BJ (cell line): ENCODE measurements at regions of chr10 and their contacts with region 1.

Region 1: DNA sequence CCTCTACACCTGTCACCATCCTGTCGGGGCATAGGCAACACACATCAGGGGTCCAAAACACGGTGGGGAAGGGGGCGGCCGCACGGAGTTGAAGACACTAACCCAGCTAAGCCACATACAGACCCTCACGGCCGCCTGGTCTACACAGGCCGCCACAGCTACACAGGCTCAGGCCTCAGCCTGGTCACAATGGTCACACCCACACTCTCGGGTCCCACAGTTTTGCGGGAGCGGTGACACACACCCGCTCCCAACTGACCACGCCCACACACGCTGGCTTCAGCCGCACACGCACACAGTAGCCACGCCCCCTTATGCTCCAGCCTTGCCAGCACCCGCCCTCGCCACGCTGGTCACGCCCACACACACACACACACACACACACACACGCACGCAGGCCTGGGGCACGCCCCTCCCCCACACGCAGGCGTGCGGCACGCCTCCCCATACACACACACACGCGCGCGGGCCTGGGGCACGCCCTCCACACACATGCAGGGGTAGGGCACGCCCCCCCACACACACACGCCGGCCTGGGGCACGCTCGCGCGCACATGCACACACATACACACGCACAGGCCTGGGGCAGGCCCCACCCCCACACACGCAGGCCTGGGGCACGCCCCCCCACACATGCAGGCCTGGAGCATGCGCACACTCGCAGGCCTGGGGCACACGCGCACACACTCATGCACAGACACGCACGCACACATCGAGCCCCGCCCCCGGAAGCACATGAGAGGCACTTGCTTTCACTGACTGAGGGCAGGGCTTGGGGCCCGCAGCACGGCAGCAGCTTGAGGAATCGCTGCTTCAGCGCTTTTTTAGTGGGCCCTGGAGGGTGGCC is 12.3 kb upstream of the OGA start:
- DNase-seq: peak; percentile 37
- H3K4me3 ChIP-seq: peak overlapping the region; percentile 45
- H3K27me3 ChIP-seq: no peaks in the 10 kb centered on the region
- CTCF ChIP-seq: no peak

Region 2: GRCh38 chr10:101507828-101508227 is 322.7 kb before region 1 on chr10:
- CTCF ChIA-PET with region 1: no interaction called
- POLR2A ChIA-PET with region 1: interaction called, 11 read pairs
- DNase-seq: no peak
- H3K4me3 ChIP-seq: no peak overlapping the region
- H3K27me3 ChIP-seq: no peaks in the 10 kb centered on the region
- CTCF ChIP-seq: no peak

Region 3: DNA sequence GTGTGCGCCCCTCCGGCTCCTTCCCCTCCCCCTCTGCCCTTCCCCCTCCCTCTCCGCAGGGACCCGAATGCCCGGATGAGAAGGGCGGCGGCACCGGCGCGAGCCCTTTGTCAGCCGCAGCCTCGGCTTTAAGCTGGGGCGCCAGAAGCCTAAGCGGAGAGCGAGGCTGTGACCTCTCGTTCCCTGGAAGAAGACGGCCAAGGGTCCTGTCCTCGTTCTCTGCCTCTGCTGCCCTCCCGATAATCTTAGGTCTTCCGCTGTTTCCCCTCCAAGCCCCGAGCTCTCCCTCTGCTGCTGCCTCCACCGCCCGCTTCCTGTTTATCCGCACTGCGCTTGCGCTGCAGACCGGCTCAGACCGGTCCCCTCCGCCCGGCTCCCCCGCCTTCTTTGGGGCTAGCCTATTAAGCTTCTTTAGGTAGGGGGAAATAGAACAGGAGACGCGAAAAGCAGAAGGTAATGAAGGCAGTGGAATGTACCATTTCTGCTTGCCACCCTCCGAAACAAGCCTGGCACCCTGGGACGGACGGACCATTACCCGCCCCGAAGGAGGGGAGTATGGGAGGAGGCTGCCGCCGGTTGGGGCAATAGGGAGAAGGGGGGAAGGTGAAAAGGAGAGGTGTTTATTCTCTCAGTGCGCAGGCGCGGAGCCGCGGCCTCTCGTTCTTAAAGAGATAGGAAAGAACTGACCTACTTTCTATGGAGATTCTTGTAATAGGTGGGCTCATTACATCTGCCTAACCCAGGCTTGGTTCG is 12.2 kb before region 1 on chr10 and contains the start of gene OGA:
- CTCF ChIA-PET with region 1: interaction called, 13 read pairs
- POLR2A ChIA-PET with region 1: no interaction called
- DNase-seq: peak; percentile 100
- H3K4me3 ChIP-seq: peak within 1 kb of the TSS; percentile 99
- H3K27me3 ChIP-seq: no peaks in the 10 kb centered on the region
- CTCF ChIP-seq: no peak
- polyA plus RNA-seq, gene OGA: 25.6 and 52.3 TPM in 2 replicates

Region 4: GRCh38 chr10:101848894-101849351 is 18.4 kb after region 1 on chr10:
- CTCF ChIA-PET with region 1: interaction called, 14 read pairs
- POLR2A ChIA-PET with region 1: no interaction called
- DNase-seq: no peak
- H3K4me3 ChIP-seq: no peak overlapping the region
- H3K27me3 ChIP-seq: no peaks in the 10 kb centered on the region
- CTCF ChIP-seq: no peak